ENCODE measurements at regions of chr9 and their contacts with region 1.

Region 1: DNA sequence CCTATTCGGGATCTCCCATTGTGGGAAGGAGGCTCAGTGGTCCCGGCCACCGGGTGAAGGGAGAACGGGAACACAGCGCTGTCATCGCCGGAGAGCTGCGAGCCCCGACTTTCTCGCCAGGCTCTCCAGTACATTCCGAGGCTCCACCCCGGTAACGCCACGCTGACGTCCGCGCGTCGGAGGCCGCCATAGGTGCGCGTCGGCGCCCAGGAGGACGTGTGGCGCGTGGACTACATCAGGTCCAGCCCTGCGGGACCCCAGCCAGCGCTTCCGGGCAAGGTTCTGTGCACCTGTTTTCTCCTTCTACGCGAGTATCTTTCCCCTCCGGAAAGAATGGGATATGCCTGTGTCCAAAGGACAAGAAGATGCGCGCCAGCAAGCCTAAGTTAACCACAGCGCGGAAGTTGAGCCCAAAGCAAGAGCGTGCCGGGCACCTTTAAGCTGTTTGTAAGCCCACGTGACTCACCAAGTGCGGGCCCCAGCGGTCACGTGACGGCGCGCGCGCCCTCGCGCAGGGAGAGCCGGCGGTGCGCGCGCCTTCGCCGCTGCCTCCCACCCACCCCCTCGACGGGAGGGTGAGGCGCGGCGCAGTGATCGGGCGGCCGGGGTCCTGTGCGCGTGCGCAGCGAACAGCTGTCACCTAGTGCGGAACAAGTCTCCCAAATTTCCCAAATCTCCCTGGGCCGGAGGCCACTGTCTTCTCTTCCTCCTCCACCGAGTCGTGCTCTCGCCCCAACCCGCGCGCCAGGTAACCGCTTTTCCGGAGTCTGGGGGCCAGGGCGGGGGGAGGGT is at the start of gene KDM4C:
- DNase-seq: peak; percentile 96
- CTCF ChIP-seq: no peak

Region 2: GRCh38 chr9:6681147-6681956 is 76.3 kb before region 1 on chr9:
- CTCF ChIA-PET with region 1: no interaction called
- POLR2A ChIA-PET with region 1: interaction called, 17 read pairs
- DNase-seq: peak; percentile 94
- CTCF ChIP-seq: no peak

Region 3: GRCh38 chr9:6715755-6716643 is 41.7 kb before region 1 on chr9:
- CTCF ChIA-PET with region 1: interaction called, 3 read pairs
- POLR2A ChIA-PET with region 1: interaction called, 12 read pairs
- DNase-seq: peak; percentile 82
- CTCF ChIP-seq: no peak

Region 4: GRCh38 chr9:6739218-6739617 is 18.4 kb before region 1 on chr9:
- CTCF ChIA-PET with region 1: interaction called, 13 read pairs
- POLR2A ChIA-PET with region 1: interaction called, 3 read pairs
- DNase-seq: no peak
- CTCF ChIP-seq: peak; percentile 18

Measured in GM10248 (cell line).